Dendritic cell treated with granulocyte-macrophage colony-stimulating factor and Interleukin-4, amounts not matched to agents 40 ng/mL and 50 ng/mL, for 4 days (primary cell): ENCODE measurements at regions of chr21 and their contacts with region 1.

Region 1: DNA sequence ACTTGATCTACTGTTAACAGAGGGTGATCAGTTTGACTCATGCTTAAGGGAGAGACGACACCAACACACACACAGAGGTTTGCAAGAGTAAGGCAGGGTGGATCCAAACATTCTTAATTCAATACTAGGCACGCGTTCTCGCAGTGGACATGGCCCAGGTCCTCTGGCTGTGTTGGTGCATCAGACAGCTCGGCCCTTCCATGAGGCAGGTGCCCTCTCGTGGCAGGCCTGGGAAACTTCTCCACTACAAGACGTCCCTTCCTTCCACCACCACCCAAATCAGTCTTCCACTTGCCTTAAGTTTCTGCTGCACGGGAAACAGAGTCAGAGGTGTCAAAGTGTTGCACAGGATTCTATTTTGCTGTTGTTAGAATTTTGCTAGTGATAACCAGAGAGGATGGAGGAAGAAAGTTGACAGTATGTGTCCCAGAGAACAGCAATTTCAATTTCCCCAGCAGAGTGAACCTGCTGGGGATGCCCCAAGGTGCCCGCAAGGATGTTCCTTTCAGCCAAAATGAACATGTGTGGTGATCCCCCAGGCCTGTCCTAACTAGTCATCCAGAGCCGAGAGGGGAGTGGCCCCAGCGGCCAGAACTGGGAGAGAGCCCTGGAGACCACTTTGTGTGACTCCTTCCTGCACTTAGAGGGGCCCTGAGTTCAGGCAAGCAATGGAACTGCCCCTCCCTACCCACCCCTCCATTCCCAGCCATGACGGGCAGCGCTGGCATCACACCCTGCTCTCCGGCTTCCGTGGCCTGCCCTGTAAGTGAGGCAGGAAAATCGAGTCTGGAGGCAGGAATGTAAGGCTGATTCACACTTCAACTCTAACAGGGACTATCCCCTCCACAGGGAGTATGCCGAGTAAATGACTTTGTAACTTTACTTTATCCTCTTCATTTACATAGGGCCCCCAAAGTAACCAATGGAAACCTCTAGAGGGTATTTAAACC is 34.8 kb downstream of the MX1 start:
- H3K4me3 Mint-ChIP-seq: no peak overlapping the region
- H3K27ac Mint-ChIP-seq: no peak overlapping the region
- H3K4me1 Mint-ChIP-seq: peaks cover 7% of the 10 kb centered on the region
- H3K27me3 Mint-ChIP-seq: peaks cover 7% of the 10 kb centered on the region

Region 2: GRCh38 chr21:41283211-41283818 is 177.5 kb before region 1 on chr21:
- intact Hi-C with region 1: loop called (anchors 1 kb)
- H3K4me3 Mint-ChIP-seq: no peak overlapping the region
- H3K27ac Mint-ChIP-seq: no peak overlapping the region
- H3K4me1 Mint-ChIP-seq: no peaks in the 10 kb centered on the region
- H3K27me3 Mint-ChIP-seq: peaks cover 17% of the 10 kb centered on the region

Region 3: DNA sequence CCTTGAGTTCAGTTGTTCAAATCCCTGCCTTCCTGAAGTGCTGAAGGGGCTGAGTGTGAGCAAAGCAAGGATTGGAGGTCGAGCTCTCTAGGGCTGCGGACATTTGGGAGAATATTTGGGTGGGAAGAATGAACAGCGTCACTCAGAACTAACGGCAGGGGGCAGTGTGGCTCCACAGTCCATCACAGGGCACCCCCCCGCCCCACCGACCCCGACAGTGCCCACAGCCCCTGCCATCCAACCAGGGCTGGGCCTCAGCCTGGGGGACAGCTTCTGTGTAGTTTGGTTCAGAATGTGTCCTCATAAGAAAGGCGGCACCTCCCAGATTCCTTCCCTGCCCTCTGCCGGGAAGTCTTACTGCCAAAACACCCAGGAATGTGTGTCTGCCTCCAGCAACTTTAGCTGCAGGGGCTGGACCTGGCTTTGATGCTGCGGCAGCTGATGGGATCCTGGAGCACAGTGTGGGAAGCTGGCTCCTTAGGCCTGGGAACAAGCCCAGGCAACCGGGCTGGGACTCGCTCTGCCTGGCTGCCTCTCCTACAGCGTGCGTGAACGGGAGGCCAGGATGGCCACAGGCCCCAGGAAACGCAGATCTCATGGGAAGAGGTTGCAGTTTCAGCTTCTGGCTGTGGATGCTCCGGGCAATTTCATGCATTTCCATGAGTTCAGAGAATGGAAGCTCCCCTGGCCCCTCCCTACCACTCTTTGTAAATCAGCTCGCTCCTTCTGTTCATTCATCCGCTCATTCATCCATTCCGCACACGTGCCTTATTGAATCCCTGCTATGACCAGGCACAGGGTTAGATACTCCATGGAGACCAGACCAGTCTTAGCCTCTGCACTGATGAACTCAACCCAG is 152.1 kb after region 1 on chr21:
- intact Hi-C with region 1: no loop called
- H3K4me3 Mint-ChIP-seq: no peak overlapping the region
- H3K27ac Mint-ChIP-seq: no peak overlapping the region
- H3K4me1 Mint-ChIP-seq: peaks cover 4% of the 10 kb centered on the region
- H3K27me3 Mint-ChIP-seq: peaks cover 38% of the 10 kb centered on the region